Activated CD4-positive, alpha-beta memory T cell treated with anti-CD3 and anti-CD28 coated beads, Interleukin-2, amount 10 ng/mL, durations not matched to agents 7 days and 5 days (primary cell): ENCODE measurements at regions of chr9 and their contacts with region 1.

Region 1: DNA sequence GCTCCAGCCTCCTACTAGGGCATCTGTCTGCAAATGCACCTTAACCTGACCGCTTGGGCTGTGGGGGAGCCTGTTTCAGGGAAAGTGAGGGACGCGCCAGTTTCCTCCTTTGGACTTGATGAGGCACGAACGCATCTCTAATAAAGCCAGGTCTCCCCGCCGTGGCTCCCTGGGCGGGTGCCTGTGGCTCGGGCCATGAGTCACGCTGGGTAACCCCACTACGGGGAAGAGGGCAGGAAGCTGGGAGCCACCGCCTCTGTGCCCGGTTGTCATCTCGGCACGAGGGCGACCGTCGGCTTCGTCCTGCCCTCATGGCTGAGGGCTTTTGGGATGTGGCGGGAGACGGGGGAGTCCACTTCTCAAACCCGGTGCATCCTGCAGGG is 12.1 kb downstream of the NOTCH1 start:
- DNase-seq: peak; percentile 89
- H3K4me3 Mint-ChIP-seq: peak overlapping the region; percentile 69
- H3K27ac Mint-ChIP-seq: peak overlapping the region; percentile 90
- H3K4me1 Mint-ChIP-seq: peaks cover 56% of the 10 kb centered on the region
- H3K27me3 Mint-ChIP-seq: no peaks in the 10 kb centered on the region

Region 2: GRCh38 chr9:136545966-136546698 is 12.4 kb after region 1 on chr9 and contains the start of gene NOTCH1:
- CTCF ChIA-PET with region 1: interaction called, 3 read pairs
- POLR2A ChIA-PET with region 1: interaction called, 32 read pairs
- DNase-seq: peak; percentile 88
- H3K4me3 Mint-ChIP-seq: peak within 1 kb of the TSS; percentile 86
- H3K27ac Mint-ChIP-seq: peak within 1 kb of the TSS; percentile 88
- H3K4me1 Mint-ChIP-seq: peaks cover 46% of the 10 kb centered on the region
- H3K27me3 Mint-ChIP-seq: no peaks in the 10 kb centered on the region
- total RNA-seq, gene NOTCH1: 58.8 to 59.8 TPM